Heart left ventricle (tissue), 16 donors: ENCODE measurements at regions of chr7 and their contacts with region 1.

Region 1: GRCh38 chr7:155257482-155258225 is 40.0 kb upstream of the INSIG1 start:
- DNase-seq: peak; percentile 80 to 84 (median 81)
- ATAC-seq: peak; percentile 70 to 90 (median 88)
- H3K4me3 ChIP-seq: peak overlapping the region in 8 of 12 donors; percentile 13 to 29 (median 23)
- H3K27ac ChIP-seq: peak overlapping the region; percentile 13 to 80 (median 74)
- H3K4me1 ChIP-seq: peaks cover 7 to 23% (median 14%) of the 10 kb centered on the region in 12 donors
- H3K27me3 ChIP-seq: peaks cover 0 to 2% (median 0%) of the 10 kb centered on the region in 9 donors
- CTCF ChIP-seq: no peak
- POLR2A ChIP-seq: peak in 1 of 2 donors; percentile 21

Region 2: GRCh38 chr7:155190688-155191087 is 67.0 kb before region 1 on chr7:
- intact Hi-C with region 1: loop called in 2 of 10 experiments (anchors 5 kb)
- DNase-seq: peak in 1 of 5 donors; percentile 49
- ATAC-seq: peak in 3 of 4 donors; percentile 69 to 75 (median 73)
- H3K4me3 ChIP-seq: peak overlapping the region in 3 of 12 donors; percentile 9 to 22 (median 12)
- H3K27ac ChIP-seq: no peak overlapping the region
- H3K4me1 ChIP-seq: peaks cover 0 to 5% (median 2%) of the 10 kb centered on the region in 12 donors
- H3K27me3 ChIP-seq: peaks cover 0 to 19% (median 7%) of the 10 kb centered on the region in 9 donors
- CTCF ChIP-seq: peak; percentile 80 to 93 (median 85)
- POLR2A ChIP-seq: no peak

Region 3: GRCh38 chr7:155205368-155206317 is 52.0 kb before region 1 on chr7:
- intact Hi-C with region 1: loop called in 4 of 10 experiments (anchors 1 to 5 kb)
- DNase-seq: peak; percentile 85 to 90 (median 88)
- ATAC-seq: peak; percentile 86 to 90 (median 87)
- H3K4me3 ChIP-seq: peak overlapping the region in 11 of 12 donors; percentile 16 to 58 (median 48)
- H3K27ac ChIP-seq: peak overlapping the region; percentile 74 to 97 (median 86)
- H3K4me1 ChIP-seq: peaks cover 0 to 22% (median 8%) of the 10 kb centered on the region in 12 donors
- H3K27me3 ChIP-seq: peaks cover 0 to 8% (median 0%) of the 10 kb centered on the region in 9 donors
- CTCF ChIP-seq: peak in 1 of 12 donors; percentile 14
- POLR2A ChIP-seq: peak in 1 of 2 donors; percentile 33

Region 4: GRCh38 chr7:155237726-155238125 is 19.9 kb before region 1 on chr7:
- intact Hi-C with region 1: loop called in 1 of 10 experiments (anchors 1 kb)
- DNase-seq: no peak
- ATAC-seq: no peak
- H3K4me3 ChIP-seq: no peak overlapping the region
- H3K27ac ChIP-seq: no peak overlapping the region
- H3K4me1 ChIP-seq: no peaks in the 10 kb centered on the region
- H3K27me3 ChIP-seq: peaks cover 0 to 7% (median 0%) of the 10 kb centered on the region in 9 donors
- CTCF ChIP-seq: no peak
- POLR2A ChIP-seq: no peak

Region 5: DNA sequence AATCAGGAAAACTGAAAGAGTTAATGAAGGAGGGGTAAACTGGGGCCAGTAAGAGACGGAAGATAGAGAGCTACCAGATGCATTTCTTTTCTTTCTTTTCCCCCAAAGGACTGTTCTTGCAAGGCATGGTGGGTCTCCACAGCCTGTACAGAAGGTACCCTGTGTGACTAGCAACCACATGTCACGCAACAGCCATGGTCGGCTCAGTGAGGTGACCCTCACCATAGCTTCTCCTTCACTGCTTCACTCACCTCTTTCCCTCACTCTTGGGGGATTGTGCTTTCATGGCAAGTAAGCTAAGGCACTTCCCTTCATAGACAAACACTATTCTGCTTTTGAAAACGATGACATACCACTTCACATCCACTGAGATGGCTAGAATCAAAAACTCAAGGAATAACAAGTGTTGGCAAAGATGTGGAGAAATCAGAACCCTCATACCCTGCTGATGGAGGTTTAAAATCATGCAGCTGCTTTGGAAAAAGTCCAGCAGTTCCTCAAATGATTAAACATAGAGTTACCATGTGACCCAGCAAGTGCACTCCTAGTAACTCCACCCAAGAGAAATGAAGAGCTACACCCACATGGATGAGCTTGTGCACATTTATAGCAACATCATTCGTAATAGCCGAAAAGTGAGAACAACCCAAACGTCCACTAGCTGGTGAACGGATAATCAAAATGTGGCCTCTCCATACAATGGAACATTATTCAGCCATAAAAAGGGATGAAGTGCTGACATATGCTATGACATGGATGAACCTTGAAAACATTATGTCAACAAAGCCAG is 36.3 kb after region 1 on chr7:
- intact Hi-C with region 1: loop called in 5 of 10 experiments (anchors 2 to 5 kb)
- DNase-seq: no peak
- ATAC-seq: no peak
- H3K4me3 ChIP-seq: no peak overlapping the region
- H3K27ac ChIP-seq: peak overlapping the region in 1 of 12 donors; percentile 39
- H3K4me1 ChIP-seq: peaks cover 0 to 25% (median 7%) of the 10 kb centered on the region in 12 donors
- H3K27me3 ChIP-seq: no peaks in the 10 kb centered on the region
- CTCF ChIP-seq: no peak
- POLR2A ChIP-seq: no peak

Region 6: GRCh38 chr7:155298834-155299534 is 41.3 kb after region 1 on chr7:
- intact Hi-C with region 1: loop called in 5 of 10 experiments (anchors 2 to 5 kb)
- DNase-seq: peak; percentile 92 to 96 (median 95)
- ATAC-seq: peak; percentile 85 to 92 (median 88)
- H3K4me3 ChIP-seq: peak overlapping the region; percentile 46 to 97 (median 90)
- H3K27ac ChIP-seq: peak overlapping the region; percentile 1 to 98 (median 92)
- H3K4me1 ChIP-seq: peaks cover 0 to 50% (median 27%) of the 10 kb centered on the region in 12 donors
- H3K27me3 ChIP-seq: no peaks in the 10 kb centered on the region
- CTCF ChIP-seq: peak in 2 of 12 donors; percentile 20 to 21
- POLR2A ChIP-seq: peak in 1 of 2 donors; percentile 59

Region 7: DNA sequence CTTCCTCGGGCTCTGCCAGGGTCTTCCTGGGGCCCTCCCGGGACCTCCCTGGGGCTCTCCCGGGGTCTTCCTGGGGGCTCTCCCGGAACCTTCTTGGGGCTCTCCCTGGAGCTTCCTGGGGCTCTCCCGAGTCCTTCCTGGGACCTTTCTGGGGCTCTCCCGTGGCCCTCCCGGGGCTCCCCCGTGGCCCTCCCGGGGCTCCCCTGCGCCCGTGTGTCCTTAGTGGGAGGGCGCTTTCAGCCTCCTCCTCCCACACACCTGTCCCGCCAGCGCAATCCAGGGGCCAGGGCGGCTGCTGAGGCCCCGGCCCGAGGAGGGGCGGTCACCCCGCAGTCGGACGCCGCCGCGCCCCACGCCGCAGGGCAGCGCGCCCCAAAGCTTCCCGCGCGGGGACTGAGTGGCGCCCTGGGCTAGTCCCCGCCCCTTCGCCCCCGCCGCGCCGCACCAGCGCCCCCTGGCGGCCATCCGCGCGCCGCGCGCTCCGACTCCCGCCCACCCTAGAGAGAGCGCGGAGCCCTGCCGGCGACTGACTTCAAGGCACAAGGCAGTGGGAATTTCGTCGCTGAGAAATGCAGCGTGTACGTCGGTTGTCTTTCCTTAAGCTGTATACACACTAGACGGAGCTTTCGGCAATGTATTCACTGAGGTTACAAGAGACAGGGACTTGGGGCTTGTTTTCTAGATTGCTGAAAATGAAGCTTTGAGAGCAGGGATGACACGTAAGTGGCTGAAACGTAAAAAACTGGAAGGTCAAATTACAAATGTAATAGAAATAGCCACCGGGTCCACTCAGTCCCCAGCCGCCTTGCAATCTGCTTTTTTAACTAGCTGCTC is 87.2 kb after region 1 on chr7:
- intact Hi-C with region 1: loop called in 1 of 10 experiments (anchors 10 kb)
- DNase-seq: peak; percentile 67 to 91 (median 74)
- ATAC-seq: peak; percentile 67 to 99 (median 90)
- H3K4me3 ChIP-seq: peak overlapping the region in 10 of 12 donors; percentile 16 to 53 (median 42)
- H3K27ac ChIP-seq: no peak overlapping the region
- H3K4me1 ChIP-seq: peaks cover 0 to 10% (median 4%) of the 10 kb centered on the region in 12 donors
- H3K27me3 ChIP-seq: peaks cover 5 to 21% (median 7%) of the 10 kb centered on the region in 9 donors
- CTCF ChIP-seq: peak in 11 of 12 donors; percentile 65 to 97 (median 89)
- POLR2A ChIP-seq: peak in 1 of 2 donors; percentile 6